MCF 10A (cell line): ENCODE measurements at regions of chr6 and their contacts with region 1.

Region 1: GRCh38 chr6:70686548-70687133 is 19.0 kb downstream of the SMAP1 start:
- DNase-seq: peak; percentile 42
- H3K4me3 Mint-ChIP-seq: no peak overlapping the region
- H3K27ac Mint-ChIP-seq: no peak overlapping the region
- H3K4me1 Mint-ChIP-seq: no peaks in the 10 kb centered on the region
- H3K27me3 Mint-ChIP-seq: no peaks in the 10 kb centered on the region
- CTCF ChIP-seq: peak; percentile 37

Region 2: DNA sequence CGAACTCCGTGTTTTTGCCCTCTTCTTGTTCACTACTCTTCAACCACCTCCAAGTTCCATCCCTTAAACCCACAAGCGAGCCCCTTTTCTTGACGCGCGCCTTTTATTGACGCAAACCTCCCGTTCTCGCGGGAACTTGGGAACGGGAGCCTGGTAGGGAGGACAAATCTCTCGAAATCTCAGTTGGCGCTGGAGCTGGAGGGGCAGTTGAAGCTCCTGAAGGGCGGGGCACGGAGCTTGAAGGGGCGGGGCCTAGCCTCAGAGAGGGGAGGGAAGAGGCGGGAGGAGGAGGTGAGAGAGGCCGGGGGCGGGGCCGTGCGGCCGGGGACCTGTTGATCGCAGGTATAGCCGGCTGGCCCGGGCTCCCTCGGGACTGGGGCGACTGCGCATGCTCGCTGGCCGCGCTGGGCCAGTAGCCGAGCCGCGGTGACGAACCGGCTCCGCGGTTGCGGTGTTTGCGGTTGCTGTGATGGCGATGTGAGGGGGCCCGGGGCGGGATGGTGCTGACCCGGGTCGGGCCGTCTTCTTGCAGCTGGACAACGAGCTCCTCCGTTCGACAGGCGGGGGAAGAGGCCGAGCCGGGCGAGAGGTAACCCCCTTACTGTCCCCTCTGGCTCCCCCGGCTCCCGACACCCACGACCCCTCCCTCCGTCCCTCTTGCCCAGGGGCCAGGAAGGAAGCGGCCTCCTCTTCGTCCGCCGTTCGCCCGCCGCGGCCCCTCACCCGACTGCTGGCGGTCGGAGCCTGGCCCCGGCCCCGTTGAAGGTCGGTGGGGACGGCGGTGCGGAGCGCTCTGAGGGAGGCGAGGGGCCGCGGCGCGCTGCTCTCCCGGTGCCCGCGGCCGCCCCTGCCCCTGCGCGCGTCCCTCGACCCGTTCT is 273.3 kb before region 1 on chr6 and contains the start of gene FAM135A:
- CTCF ChIA-PET with region 1: no interaction called
- POLR2A ChIA-PET with region 1: interaction called, 3 read pairs
- intact Hi-C with region 1: loop called (anchors 5 kb)
- DNase-seq: peak; percentile 99
- H3K4me3 Mint-ChIP-seq: peak within 1 kb of the TSS; percentile 92
- H3K27ac Mint-ChIP-seq: peak within 1 kb of the TSS; percentile 75
- H3K4me1 Mint-ChIP-seq: no peaks in the 10 kb centered on the region
- H3K27me3 Mint-ChIP-seq: no peaks in the 10 kb centered on the region
- CTCF ChIP-seq: no peak
- total RNA-seq, gene FAM135A: 20.4 and 22.0 TPM in 2 replicates

Region 3: DNA sequence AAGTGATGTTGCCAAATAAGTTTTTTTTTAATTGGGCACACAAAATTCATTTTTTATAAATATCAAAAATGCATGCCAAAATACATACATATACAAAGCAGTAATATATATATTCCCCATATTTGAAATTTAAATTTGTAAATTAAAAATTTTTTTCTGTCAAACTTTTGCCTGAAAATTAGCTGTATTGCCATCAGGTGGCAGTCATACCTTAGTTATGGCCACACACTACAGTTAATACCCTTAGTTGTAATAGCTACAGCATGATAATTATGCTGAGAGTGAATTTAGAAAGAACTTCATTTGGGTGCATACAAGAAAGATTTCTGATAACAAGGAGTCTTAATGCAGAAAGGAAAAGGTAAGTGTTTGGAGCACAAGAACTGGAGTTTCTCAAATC is 166.1 kb before region 1 on chr6:
- CTCF ChIA-PET with region 1: interaction called, 9 read pairs
- POLR2A ChIA-PET with region 1: interaction called, 4 read pairs
- intact Hi-C with region 1: loop called (anchors 1 kb)
- DNase-seq: peak; percentile 13
- H3K4me3 Mint-ChIP-seq: no peak overlapping the region
- H3K27ac Mint-ChIP-seq: no peak overlapping the region
- H3K4me1 Mint-ChIP-seq: no peaks in the 10 kb centered on the region
- H3K27me3 Mint-ChIP-seq: no peaks in the 10 kb centered on the region
- CTCF ChIP-seq: peak; percentile 46

Region 4: GRCh38 chr6:70547313-70547712 is 139.3 kb before region 1 on chr6:
- CTCF ChIA-PET with region 1: interaction called, 37 read pairs
- POLR2A ChIA-PET with region 1: no interaction called
- intact Hi-C with region 1: loop called (anchors 1 kb)
- DNase-seq: peak; percentile 10
- H3K4me3 Mint-ChIP-seq: no peak overlapping the region
- H3K27ac Mint-ChIP-seq: no peak overlapping the region
- H3K4me1 Mint-ChIP-seq: no peaks in the 10 kb centered on the region
- H3K27me3 Mint-ChIP-seq: no peaks in the 10 kb centered on the region
- CTCF ChIP-seq: peak; percentile 28

Region 5: DNA sequence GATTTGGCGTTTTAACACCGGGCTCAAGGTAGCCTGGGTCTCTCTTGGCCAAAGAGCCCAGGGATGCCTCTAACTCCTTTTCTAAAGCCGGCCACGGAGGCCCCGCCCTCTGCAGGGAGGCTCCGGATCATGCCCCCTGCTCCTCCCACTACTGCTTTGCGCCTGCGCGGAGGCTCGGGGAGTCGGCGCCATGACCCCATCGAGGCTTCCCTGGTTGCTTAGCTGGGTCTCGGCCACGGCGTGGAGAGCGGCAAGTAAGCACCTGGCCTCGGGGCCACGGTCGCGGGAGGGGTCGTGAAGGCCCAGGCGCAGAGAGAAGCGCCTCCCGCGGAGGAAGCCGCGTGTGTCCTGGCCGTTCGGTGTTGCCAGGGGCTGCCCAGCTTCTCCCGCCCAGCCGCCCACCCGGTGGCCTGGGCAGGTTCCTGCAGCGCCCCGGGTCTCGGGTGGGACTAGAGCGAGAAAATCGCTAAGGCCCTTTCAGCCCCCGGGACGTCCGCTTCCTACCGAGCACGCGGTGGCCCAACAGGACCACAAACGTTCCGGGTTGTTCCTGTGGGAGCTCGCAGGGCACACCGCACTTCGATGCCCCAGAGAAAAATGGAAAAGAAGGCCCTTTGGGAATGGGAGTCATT is 119.8 kb before region 1 on chr6 and contains the start of gene SDHAF4:
- CTCF ChIA-PET with region 1: interaction called, 11 read pairs
- POLR2A ChIA-PET with region 1: interaction called, 5 read pairs
- intact Hi-C with region 1: no loop called
- DNase-seq: peak; percentile 93
- H3K4me3 Mint-ChIP-seq: peak within 1 kb of the TSS; percentile 77
- H3K27ac Mint-ChIP-seq: peak within 1 kb of the TSS; percentile 66
- H3K4me1 Mint-ChIP-seq: peaks cover 5% of the 10 kb centered on the region
- H3K27me3 Mint-ChIP-seq: no peaks in the 10 kb centered on the region
- CTCF ChIP-seq: no peak
- total RNA-seq, gene SDHAF4: 13.1 and 15.2 TPM in 2 replicates

Region 6: GRCh38 chr6:70673601-70674000 is 13.0 kb before region 1 on chr6:
- CTCF ChIA-PET with region 1: interaction called, 18 read pairs
- POLR2A ChIA-PET with region 1: no interaction called
- intact Hi-C with region 1: no loop called
- DNase-seq: no peak
- H3K4me3 Mint-ChIP-seq: no peak overlapping the region
- H3K27ac Mint-ChIP-seq: no peak overlapping the region
- H3K4me1 Mint-ChIP-seq: peaks cover 37% of the 10 kb centered on the region
- H3K27me3 Mint-ChIP-seq: no peaks in the 10 kb centered on the region
- CTCF ChIP-seq: no peak

Region 7: GRCh38 chr6:70811788-70812187 is 125.1 kb after region 1 on chr6:
- CTCF ChIA-PET with region 1: no interaction called
- POLR2A ChIA-PET with region 1: no interaction called
- intact Hi-C with region 1: no loop called
- DNase-seq: peak; percentile 75
- H3K4me3 Mint-ChIP-seq: no peak overlapping the region
- H3K27ac Mint-ChIP-seq: peak overlapping the region; percentile 83
- H3K4me1 Mint-ChIP-seq: peaks cover 8% of the 10 kb centered on the region
- H3K27me3 Mint-ChIP-seq: no peaks in the 10 kb centered on the region
- CTCF ChIP-seq: no peak